Activated B cell treated with CpG ODN at 0.5 μM for 24 hours (primary cell): ENCODE measurements at regions of chr14 and their contacts with region 1.

Region 1: GRCh38 chr14:49633640-49634546 is 1.2 kb downstream of the DNAAF2 start:
- DNase-seq: peak; percentile 92
- ATAC-seq: peak; percentile 80
- H3K4me3 Mint-ChIP-seq: peak overlapping the region; percentile 96
- H3K27ac Mint-ChIP-seq: peak overlapping the region; percentile 98
- H3K4me1 Mint-ChIP-seq: peaks cover 66% of the 10 kb centered on the region
- H3K27me3 Mint-ChIP-seq: no peaks in the 10 kb centered on the region
- CTCF ChIP-seq: no peak

Region 2: DNA sequence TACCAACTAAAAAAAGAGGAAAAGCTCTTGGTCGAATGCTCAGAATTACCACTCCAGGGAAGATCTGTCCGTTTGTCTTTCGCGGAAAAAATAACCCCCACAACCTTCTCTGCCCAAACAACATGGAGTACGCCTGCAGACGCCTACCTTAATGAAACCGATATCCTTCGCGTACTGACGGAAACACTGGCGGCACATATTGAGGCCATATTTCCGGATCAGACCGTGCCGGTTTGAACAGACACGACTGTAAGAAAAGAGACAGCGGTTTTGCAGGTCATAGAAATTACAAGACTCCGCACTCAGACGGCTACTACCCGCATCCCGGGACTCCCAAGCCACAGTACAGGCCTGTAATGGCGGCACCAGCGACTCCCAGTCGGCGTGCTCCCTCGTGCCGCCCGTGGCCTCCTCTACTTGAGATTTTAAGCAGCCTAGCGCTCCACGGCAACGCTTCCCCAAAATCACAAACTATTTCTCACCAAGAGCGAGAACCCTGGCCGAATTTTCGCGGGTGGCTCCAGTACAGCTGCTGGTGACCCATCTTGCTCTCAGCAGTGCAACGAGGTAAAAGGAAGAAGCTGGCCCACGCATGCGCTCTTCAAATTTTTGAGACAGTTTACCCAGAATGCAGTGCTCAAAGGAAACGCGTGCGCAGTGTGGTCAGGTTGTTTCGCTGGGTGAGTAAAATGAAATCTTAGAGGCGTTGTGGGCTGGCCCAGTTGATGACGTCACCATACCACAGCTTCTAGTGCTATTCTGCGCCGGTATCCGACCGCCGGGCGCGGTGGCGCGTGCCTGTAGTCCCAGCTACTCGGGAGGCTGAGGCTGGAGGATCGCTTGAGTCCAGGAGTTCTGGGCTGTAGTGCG is 47.9 kb before region 1 on chr14 and contains the start of gene RPS29:
- CTCF ChIA-PET with region 1: interaction called, 13 read pairs
- POLR2A ChIA-PET with region 1: interaction called, 86 read pairs
- intact Hi-C with region 1: loop called (anchors 1 kb)
- DNase-seq: peak; percentile 94
- ATAC-seq: peak; percentile 82
- H3K4me3 Mint-ChIP-seq: peak within 1 kb of the TSS; percentile 98
- H3K27ac Mint-ChIP-seq: peak within 1 kb of the TSS; percentile 99
- H3K4me1 Mint-ChIP-seq: peaks cover 53% of the 10 kb centered on the region
- H3K27me3 Mint-ChIP-seq: no peaks in the 10 kb centered on the region
- CTCF ChIP-seq: no peak
- total RNA-seq, gene RPS29: 3,259 and 3,732 TPM in 2 replicates

Region 3: GRCh38 chr14:49620182-49621113 is 13.4 kb before region 1 on chr14 and contains the starts of genes MGAT2 and RPL36AL:
- CTCF ChIA-PET with region 1: interaction called, 25 read pairs
- POLR2A ChIA-PET with region 1: interaction called, 235 read pairs
- intact Hi-C with region 1: loop called (anchors 1 kb)
- DNase-seq: peak; percentile 90
- ATAC-seq: peak; percentile 90
- H3K4me3 Mint-ChIP-seq: peak within 1 kb of the TSS; percentile 97
- H3K27ac Mint-ChIP-seq: peak within 1 kb of the TSS; percentile 97
- H3K4me1 Mint-ChIP-seq: peaks cover 61% of the 10 kb centered on the region
- H3K27me3 Mint-ChIP-seq: no peaks in the 10 kb centered on the region
- CTCF ChIP-seq: no peak
- total RNA-seq, gene MGAT2: 39.7 and 40.5 TPM in 2 replicates
- total RNA-seq, gene RPL36AL: 150 and 166 TPM in 2 replicates

Region 4: DNA sequence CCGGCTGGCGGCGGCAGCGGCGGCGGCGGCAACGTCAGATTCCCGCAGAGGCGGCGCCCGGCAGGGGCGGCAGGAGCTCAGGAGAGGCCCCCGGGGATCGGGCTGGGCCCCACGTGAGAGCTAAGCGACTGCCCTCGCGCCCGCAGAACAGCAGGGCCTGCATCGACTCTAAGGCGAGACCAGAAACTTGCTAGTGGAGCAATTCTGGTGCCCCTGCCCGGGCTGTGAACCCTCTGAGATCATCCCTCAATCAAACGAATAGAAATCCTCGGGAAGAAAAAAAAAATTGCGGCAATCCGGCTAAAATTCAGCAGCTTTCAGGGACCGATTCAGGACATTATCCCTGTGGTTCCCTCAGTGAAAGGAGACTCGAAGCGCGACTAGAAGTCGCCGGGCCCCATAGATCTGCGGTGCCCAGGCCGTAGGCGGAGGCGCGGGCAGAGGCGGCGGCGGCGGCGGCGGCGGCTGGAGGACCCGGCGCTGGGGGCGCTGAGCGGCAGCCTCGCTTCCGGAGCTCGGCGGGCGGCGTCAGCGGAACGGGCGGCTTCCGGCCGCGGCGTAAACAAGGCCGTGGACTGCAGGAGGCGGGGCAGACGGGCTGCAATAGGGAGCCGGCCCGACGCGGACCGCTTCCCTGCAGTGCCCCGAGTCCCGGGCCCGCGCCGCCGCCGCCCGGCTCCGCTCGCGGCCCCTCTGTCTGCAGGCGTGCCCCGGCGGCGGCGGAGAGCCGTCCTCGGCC is 133.8 kb after region 1 on chr14 and contains the start of gene KLHDC2:
- CTCF ChIA-PET with region 1: interaction called, 19 read pairs
- POLR2A ChIA-PET with region 1: interaction called, 95 read pairs
- intact Hi-C with region 1: loop called (anchors 1 kb)
- DNase-seq: peak; percentile 86
- ATAC-seq: peak; percentile 88
- H3K4me3 Mint-ChIP-seq: peak within 1 kb of the TSS; percentile 97
- H3K27ac Mint-ChIP-seq: peak within 1 kb of the TSS; percentile 99
- H3K4me1 Mint-ChIP-seq: peaks cover 33% of the 10 kb centered on the region
- H3K27me3 Mint-ChIP-seq: no peaks in the 10 kb centered on the region
- CTCF ChIP-seq: no peak
- total RNA-seq, gene KLHDC2: 27.0 and 31.2 TPM in 2 replicates

Region 5: DNA sequence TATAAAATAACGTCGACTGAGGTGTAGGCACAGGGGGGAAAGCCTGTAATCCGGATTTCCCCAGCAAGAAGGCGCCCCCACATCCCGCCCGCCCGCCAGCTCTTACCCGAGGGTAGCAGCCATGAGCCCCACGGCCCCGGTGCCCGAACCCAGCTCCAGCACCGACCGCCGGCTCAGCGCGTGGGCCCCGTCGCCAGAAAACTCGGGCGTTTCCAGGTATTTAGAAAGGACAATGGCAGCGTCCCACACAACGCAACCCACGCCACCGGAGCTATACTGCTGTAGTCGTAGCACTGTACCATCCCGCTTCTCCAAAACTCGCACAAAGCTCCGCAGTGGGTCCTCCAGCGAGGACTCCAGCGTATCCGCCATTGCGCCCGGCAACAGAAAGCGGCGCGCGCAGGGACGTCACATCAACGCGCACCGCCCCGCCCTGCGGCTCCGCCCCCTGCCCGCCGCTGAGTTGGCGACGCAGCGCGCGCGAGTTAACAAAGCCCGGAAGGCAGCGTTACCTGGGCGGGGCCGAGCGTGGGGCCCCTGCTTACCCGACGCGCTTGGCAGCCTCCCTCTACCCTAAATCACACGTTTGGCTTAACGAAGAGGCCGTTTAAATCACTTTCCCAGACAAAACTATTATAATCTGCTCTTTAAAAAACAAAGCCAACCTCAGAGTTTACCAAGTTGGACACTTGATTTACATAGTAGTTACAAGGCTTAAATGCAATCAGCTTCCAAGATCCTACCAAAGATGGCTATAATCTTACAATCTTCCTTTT is 482.5 kb after region 1 on chr14 and contains the start of gene VCPKMT:
- CTCF ChIA-PET with region 1: interaction called, 3 read pairs
- POLR2A ChIA-PET with region 1: interaction called, 11 read pairs
- intact Hi-C with region 1: loop called (anchors 1 kb)
- DNase-seq: peak; percentile 97
- ATAC-seq: peak; percentile 96
- H3K4me3 Mint-ChIP-seq: peak within 1 kb of the TSS; percentile 95
- H3K27ac Mint-ChIP-seq: peak within 1 kb of the TSS; percentile 97
- H3K4me1 Mint-ChIP-seq: peaks cover 51% of the 10 kb centered on the region
- H3K27me3 Mint-ChIP-seq: no peaks in the 10 kb centered on the region
- CTCF ChIP-seq: no peak
- total RNA-seq, gene VCPKMT: 19.9 and 20.8 TPM in 2 replicates

Region 6: GRCh38 chr14:50171895-50172294 is 538.0 kb after region 1 on chr14:
- CTCF ChIA-PET with region 1: no interaction called
- POLR2A ChIA-PET with region 1: no interaction called
- intact Hi-C with region 1: no loop called
- DNase-seq: no peak
- ATAC-seq: no peak
- H3K4me3 Mint-ChIP-seq: no peak overlapping the region
- H3K27ac Mint-ChIP-seq: no peak overlapping the region
- H3K4me1 Mint-ChIP-seq: no peaks in the 10 kb centered on the region
- H3K27me3 Mint-ChIP-seq: no peaks in the 10 kb centered on the region
- CTCF ChIP-seq: no peak

Region 7: DNA sequence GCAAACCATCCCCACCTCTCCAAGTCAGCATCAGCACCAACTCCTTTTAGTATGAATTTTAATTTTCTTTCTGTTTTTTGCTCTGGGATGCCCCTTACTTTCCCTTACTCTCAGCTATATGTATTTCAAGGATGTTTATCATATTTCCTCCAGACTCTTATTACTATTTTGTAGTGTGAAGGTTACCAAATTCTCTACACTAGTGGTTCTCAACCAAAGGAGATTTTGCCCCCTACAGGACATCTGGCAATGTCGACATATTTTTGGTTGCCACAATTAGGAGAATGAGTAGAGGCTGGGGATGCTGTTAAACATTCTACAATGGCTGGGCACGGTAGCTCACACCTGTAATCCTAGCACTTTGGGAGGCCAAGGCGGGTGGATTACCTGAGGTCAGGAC is 626.6 kb after region 1 on chr14:
- CTCF ChIA-PET with region 1: no interaction called
- POLR2A ChIA-PET with region 1: no interaction called
- intact Hi-C with region 1: loop called (anchors 1 kb)
- DNase-seq: no peak
- ATAC-seq: peak; percentile 76
- H3K4me3 Mint-ChIP-seq: no peak overlapping the region
- H3K27ac Mint-ChIP-seq: no peak overlapping the region
- H3K4me1 Mint-ChIP-seq: no peaks in the 10 kb centered on the region
- H3K27me3 Mint-ChIP-seq: no peaks in the 10 kb centered on the region
- CTCF ChIP-seq: no peak

Region 8: GRCh38 chr14:50823051-50823761 is 1189.3 kb after region 1 on chr14:
- CTCF ChIA-PET with region 1: no interaction called
- POLR2A ChIA-PET with region 1: no interaction called
- intact Hi-C with region 1: loop called (anchors 10 kb)
- DNase-seq: no peak
- ATAC-seq: peak; percentile 32
- H3K4me3 Mint-ChIP-seq: peak overlapping the region; percentile 81
- H3K27ac Mint-ChIP-seq: peak overlapping the region; percentile 97
- H3K4me1 Mint-ChIP-seq: peaks cover 95% of the 10 kb centered on the region
- H3K27me3 Mint-ChIP-seq: no peaks in the 10 kb centered on the region
- CTCF ChIP-seq: no peak